Sigmoid colon (tissue), 7 donors: ENCODE measurements at regions of chr5 and their contacts with region 1.

Region 1: DNA sequence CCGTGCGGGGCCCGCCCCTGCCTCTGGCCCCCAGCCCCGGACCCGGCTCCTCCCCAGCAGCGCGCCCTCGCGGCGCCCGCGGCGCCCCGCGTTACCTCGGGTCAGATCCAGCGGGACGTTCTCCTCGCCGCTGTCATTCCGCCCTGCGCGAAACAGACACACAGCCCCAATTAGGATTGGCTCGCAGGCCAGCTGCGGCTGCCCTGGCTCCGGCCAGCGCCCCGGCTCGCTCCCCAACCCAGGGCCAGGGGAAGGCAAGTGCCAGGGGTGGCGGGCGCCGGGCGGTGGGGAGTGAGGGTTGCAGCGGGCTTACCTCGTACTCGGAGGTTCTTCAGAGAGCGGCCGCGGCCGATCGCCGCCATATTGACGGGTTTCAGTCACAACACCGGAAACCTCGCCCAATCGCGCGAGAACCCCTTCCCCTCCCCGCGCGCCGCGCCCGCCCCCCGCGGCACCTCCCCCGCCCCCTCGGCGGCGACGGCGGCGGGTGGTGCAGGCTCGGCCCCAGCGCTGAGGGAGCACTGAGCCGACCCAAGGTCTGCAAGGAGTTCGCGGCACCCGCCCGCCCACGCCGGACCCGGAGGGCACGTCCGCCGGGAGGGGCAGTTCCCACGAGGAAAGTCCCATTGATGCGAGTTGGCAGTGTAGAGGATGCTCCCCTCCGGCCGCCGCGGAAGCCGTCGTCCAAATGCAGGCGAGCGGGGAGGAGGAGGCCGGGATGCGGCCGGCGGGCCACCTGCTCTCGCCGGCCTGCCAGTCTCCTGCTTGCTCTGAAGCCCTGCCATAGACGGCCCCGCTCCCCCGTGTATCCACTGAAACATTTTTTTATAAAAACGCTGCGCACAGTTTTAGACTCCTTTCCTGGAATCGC is at the start of gene RICTOR:
- DNase-seq: peak; percentile 92
- H3K4me3 ChIP-seq: peak within 1 kb of the TSS; percentile 84 to 97 (median 91)
- H3K27ac ChIP-seq: peak within 1 kb of the TSS; percentile 95 to 100 (median 98)
- H3K4me1 ChIP-seq: peaks cover 0 to 45% (median 17%) of the 10 kb centered on the region in 4 donors
- H3K27me3 ChIP-seq: no peaks in the 10 kb centered on the region
- CTCF ChIP-seq: no peak
- EP300 ChIP-seq: no peak
- POLR2A ChIP-seq: no peak
- total RNA-seq, gene RICTOR: 32.8 to 50.1 (median 41.2) TPM

Region 2: GRCh38 chr5:38433160-38433861 is 640.9 kb before region 1 on chr5:
- intact Hi-C with region 1: loop called (anchors 10 kb)
- DNase-seq: peak; percentile 74
- H3K4me3 ChIP-seq: no peak overlapping the region
- H3K27ac ChIP-seq: peak overlapping the region; percentile 27 to 75 (median 57)
- H3K4me1 ChIP-seq: peaks cover 0 to 33% (median 29%) of the 10 kb centered on the region in 4 donors
- H3K27me3 ChIP-seq: no peaks in the 10 kb centered on the region
- CTCF ChIP-seq: peak in 1 of 4 experiments; percentile 57
- EP300 ChIP-seq: no peak
- POLR2A ChIP-seq: no peak

Region 3: DNA sequence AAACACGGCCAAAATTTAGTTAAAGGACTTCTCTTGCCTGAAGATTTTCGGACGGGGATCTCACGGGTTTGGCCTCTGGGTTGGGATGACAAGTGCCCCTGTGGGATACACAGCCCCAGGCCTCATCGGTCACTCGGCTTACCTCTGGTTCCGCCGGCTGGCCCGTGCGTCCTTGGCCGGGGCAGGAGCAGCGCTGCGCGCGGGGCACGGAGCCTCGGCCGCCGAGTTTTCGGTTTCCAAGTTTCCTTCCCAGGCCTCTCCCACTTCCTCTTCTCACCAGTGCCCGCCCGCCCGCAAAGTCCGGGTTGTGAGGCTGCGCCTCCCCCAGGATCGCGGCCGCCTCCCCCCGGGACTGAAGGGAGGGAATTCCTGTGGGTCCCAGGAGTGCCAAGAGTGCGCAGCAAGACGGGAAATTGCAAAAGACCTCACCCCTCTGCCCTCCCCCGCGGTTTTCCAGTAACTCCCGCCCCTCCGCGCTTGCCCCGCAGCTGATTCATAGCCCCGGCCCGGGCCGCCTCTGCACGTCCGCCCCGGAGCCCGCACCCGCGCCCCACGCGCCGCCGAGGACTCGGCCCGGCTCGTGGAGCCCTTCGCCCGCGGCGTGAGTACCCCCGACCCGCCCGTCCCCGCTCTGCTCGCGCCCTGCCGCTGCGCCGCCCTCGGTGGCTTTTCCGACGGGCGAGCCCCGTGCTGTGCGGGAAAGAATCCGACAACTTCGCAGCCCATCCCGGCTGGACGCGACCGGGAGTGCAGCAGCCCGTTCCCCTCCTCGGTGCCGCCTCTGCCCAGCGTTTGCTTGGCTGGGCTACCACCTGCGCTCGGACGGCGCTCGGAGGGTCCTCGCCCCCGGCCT is 228.5 kb before region 1 on chr5 and contains the start of gene OSMR:
- intact Hi-C with region 1: loop called (anchors 2 kb)
- DNase-seq: peak; percentile 98
- H3K4me3 ChIP-seq: peak within 1 kb of the TSS; percentile 62 to 88 (median 88)
- H3K27ac ChIP-seq: peak within 1 kb of the TSS; percentile 88 to 97 (median 94)
- H3K4me1 ChIP-seq: peaks cover 0 to 48% (median 34%) of the 10 kb centered on the region in 4 donors
- H3K27me3 ChIP-seq: no peaks in the 10 kb centered on the region
- CTCF ChIP-seq: no peak
- EP300 ChIP-seq: peak; percentile 44 to 84 (median 79)
- POLR2A ChIP-seq: peak in 1 of 2 donors; percentile 37
- total RNA-seq, gene OSMR: 18.5 to 65.3 (median 39.0) TPM